Natural killer cell (primary cell): ENCODE measurements at regions of chr19 and their contacts with region 1.

Region 1: DNA sequence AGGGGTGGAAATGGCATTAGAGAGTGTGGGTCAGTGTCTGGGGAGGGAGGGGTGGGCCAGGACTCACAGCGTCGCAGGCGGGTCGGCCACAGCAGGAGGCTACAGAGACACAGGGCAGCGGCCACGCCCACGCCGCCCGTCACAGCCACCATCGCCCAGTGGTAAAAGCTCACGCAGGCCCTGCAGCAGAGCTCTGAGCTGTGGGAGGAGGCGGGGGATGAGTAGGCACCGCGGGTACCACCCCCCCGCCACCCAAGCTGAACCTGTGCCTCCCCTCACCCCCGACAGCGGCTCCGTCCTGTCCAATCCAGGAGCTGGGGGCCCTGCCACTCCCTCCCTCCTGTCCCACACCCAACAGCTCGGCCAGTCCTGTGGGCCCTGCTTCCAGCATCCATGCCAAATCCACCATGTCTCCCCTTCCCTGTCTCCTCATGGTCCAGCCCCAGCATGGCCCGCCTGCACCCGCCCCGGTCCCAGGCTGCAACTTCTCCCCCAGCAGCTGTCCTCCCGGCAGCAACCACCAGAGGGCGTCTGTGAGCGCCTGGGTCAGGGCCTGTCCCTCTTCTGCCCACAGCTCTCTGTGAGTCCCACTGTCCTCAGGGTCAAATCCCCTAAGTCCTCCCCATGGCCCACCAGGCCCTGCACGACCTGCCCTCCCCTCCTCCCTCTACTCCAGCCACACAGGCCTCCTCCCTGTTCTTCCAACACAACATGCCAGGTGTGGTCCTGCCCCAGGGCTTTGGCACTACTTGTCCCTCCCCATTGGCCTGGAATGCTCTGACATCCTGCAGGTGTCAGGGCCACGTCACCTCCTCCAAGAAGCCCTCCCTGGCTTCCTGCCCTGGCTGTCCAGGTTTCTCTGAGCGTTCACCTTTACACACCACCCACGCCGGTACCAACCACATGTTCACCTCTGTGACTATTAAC is 6.0 kb downstream of the TEKTIP1 start:
- DNase-seq: peak; percentile 83 to 84
- ATAC-seq: peak; percentile 77 to 93 (median 82)
- H3K4me3 ChIP-seq: no peak overlapping the region
- H3K4me3 Mint-ChIP-seq: no peak overlapping the region
- H3K27ac ChIP-seq: no peak overlapping the region
- H3K27ac Mint-ChIP-seq: peak overlapping the region; percentile 26 to 59
- H3K4me1 ChIP-seq: peaks cover 14% of the 10 kb centered on the region
- H3K4me1 Mint-ChIP-seq: peaks cover 0 to 14% of the 10 kb centered on the region in 2 donors
- H3K27me3 ChIP-seq: no peaks in the 10 kb centered on the region
- H3K27me3 Mint-ChIP-seq: no peaks in the 10 kb centered on the region
- CTCF ChIP-seq: peak; percentile 91

Region 2: GRCh38 chr19:3505598-3506383 is 39.2 kb before region 1 on chr19 and contains the start of gene FZR1:
- intact Hi-C with region 1: no loop called
- DNase-seq: peak; percentile 99 to 100
- ATAC-seq: peak; percentile 84 to 98 (median 88)
- H3K4me3 ChIP-seq: peak within 1 kb of the TSS; percentile 84
- H3K4me3 Mint-ChIP-seq: peak within 1 kb of the TSS; percentile 94
- H3K27ac ChIP-seq: peak within 1 kb of the TSS; percentile 89
- H3K27ac Mint-ChIP-seq: peak within 1 kb of the TSS; percentile 97 to 98
- H3K4me1 ChIP-seq: peaks cover 55% of the 10 kb centered on the region
- H3K4me1 Mint-ChIP-seq: peaks cover 43 to 45% of the 10 kb centered on the region in 2 donors
- H3K27me3 ChIP-seq: no peaks in the 10 kb centered on the region
- H3K27me3 Mint-ChIP-seq: no peaks in the 10 kb centered on the region
- CTCF ChIP-seq: no peak
- total RNA-seq, gene FZR1: 89.1 to 98.3 (median 91.4) TPM

Region 3: GRCh38 chr19:3618144-3618810 is 73.3 kb after region 1 on chr19:
- intact Hi-C with region 1: loop called (anchors 1 kb)
- DNase-seq: peak; percentile 41 to 67
- ATAC-seq: peak; percentile 65 to 85 (median 77)
- H3K4me3 ChIP-seq: no peak overlapping the region
- H3K4me3 Mint-ChIP-seq: no peak overlapping the region
- H3K27ac ChIP-seq: no peak overlapping the region
- H3K27ac Mint-ChIP-seq: no peak overlapping the region
- H3K4me1 ChIP-seq: peaks cover 11% of the 10 kb centered on the region
- H3K4me1 Mint-ChIP-seq: peaks cover 0 to 5% of the 10 kb centered on the region in 2 donors
- H3K27me3 ChIP-seq: no peaks in the 10 kb centered on the region
- H3K27me3 Mint-ChIP-seq: no peaks in the 10 kb centered on the region
- CTCF ChIP-seq: peak; percentile 74

Region 4: DNA sequence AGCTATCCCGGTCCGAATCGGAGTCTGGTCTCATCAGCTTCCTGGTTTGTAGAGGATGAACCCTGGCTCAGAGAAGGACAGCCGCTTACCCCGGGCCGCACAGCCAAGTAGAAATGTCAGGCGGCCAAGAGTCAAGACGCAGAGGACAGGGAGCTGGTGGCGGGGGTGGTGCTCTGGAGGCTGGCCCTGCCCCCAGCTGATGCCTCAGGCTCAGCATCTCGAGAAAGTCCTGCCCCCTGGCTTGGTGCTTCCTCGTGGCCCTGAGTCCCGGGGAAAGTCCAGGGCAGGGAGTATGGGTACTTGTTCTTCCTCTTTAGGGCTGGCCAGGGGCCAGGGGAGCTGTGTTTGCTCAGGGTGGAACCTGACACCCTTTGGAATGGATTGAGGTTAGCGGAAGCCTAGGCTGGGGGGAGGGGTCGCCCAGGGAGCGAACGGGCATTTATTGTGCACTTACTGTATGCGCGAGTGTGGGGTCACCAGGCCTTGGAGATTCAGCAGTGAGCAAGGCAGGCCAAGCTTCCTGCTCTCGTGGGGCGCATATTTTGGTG is 165.3 kb after region 1 on chr19:
- intact Hi-C with region 1: loop called (anchors 2 kb)
- DNase-seq: no peak
- ATAC-seq: peak in 2 of 3 donors; percentile 24 to 41
- H3K4me3 ChIP-seq: no peak overlapping the region
- H3K4me3 Mint-ChIP-seq: no peak overlapping the region
- H3K27ac ChIP-seq: no peak overlapping the region
- H3K27ac Mint-ChIP-seq: no peak overlapping the region
- H3K4me1 ChIP-seq: peaks cover 3% of the 10 kb centered on the region
- H3K4me1 Mint-ChIP-seq: peaks cover 0 to 9% of the 10 kb centered on the region in 2 donors
- H3K27me3 ChIP-seq: no peaks in the 10 kb centered on the region
- H3K27me3 Mint-ChIP-seq: no peaks in the 10 kb centered on the region
- CTCF ChIP-seq: no peak